CD8-positive, alpha-beta T cell (primary cell): ENCODE measurements at regions of chr17 and their contacts with region 1.

Region 1: GRCh38 chr17:49779739-49780231 is 8.7 kb upstream of the KAT7 start:
- DNase-seq: peak in 3 of 9 experiments; percentile 24 to 65 (median 55)
- ATAC-seq: no peak
- H3K4me3 ChIP-seq: no peak overlapping the region
- H3K4me3 Mint-ChIP-seq: no peak overlapping the region
- H3K27ac ChIP-seq: no peak overlapping the region
- H3K27ac Mint-ChIP-seq: no peak overlapping the region
- H3K4me1 ChIP-seq: no peaks in the 10 kb centered on the region
- H3K4me1 Mint-ChIP-seq: peaks cover 5% of the 10 kb centered on the region
- H3K27me3 ChIP-seq: no peaks in the 10 kb centered on the region
- H3K27me3 Mint-ChIP-seq: no peaks in the 10 kb centered on the region
- CTCF ChIP-seq: peak; percentile 24

Region 2: GRCh38 chr17:49567871-49568694 is 211.7 kb before region 1 on chr17:
- CTCF ChIA-PET with region 1: interaction called, 24 read pairs
- POLR2A ChIA-PET with region 1: no interaction called
- intact Hi-C with region 1: loop called in 1 of 2 experiments (anchors 2 kb)
- DNase-seq: peak; percentile 69 to 91 (median 82)
- ATAC-seq: peak; percentile 59
- H3K4me3 ChIP-seq: peak overlapping the region; percentile 6 to 25
- H3K4me3 Mint-ChIP-seq: peak overlapping the region; percentile 62
- H3K27ac ChIP-seq: no peak overlapping the region
- H3K27ac Mint-ChIP-seq: no peak overlapping the region
- H3K4me1 ChIP-seq: peaks cover 12% of the 10 kb centered on the region
- H3K4me1 Mint-ChIP-seq: peaks cover 8% of the 10 kb centered on the region
- H3K27me3 ChIP-seq: no peaks in the 10 kb centered on the region
- H3K27me3 Mint-ChIP-seq: peaks cover 12% of the 10 kb centered on the region
- CTCF ChIP-seq: peak; percentile 96